MCF 10A (cell line): ENCODE measurements at regions of chr12 and their contacts with region 1.

Region 1: GRCh38 chr12:54191550-54192022 is 2.8 kb upstream of the SMUG1 start:
- DNase-seq: peak; percentile 87
- H3K4me3 Mint-ChIP-seq: no peak overlapping the region
- H3K27ac Mint-ChIP-seq: no peak overlapping the region
- H3K4me1 Mint-ChIP-seq: peaks cover 9% of the 10 kb centered on the region
- H3K27me3 Mint-ChIP-seq: no peaks in the 10 kb centered on the region
- CTCF ChIP-seq: peak; percentile 48

Region 2: GRCh38 chr12:53675651-53676453 is 515.7 kb before region 1 on chr12 and contains the start of gene ATP5MC2:
- CTCF ChIA-PET with region 1: no interaction called
- POLR2A ChIA-PET with region 1: no interaction called
- intact Hi-C with region 1: no loop called
- DNase-seq: peak; percentile 98
- H3K4me3 Mint-ChIP-seq: peak within 1 kb of the TSS; percentile 83
- H3K27ac Mint-ChIP-seq: peak within 1 kb of the TSS; percentile 80
- H3K4me1 Mint-ChIP-seq: peaks cover 10% of the 10 kb centered on the region
- H3K27me3 Mint-ChIP-seq: peaks cover 12% of the 10 kb centered on the region
- CTCF ChIP-seq: peak; percentile 97
- total RNA-seq, gene ATP5MC2: 328 and 381 TPM in 2 replicates

Region 3: DNA sequence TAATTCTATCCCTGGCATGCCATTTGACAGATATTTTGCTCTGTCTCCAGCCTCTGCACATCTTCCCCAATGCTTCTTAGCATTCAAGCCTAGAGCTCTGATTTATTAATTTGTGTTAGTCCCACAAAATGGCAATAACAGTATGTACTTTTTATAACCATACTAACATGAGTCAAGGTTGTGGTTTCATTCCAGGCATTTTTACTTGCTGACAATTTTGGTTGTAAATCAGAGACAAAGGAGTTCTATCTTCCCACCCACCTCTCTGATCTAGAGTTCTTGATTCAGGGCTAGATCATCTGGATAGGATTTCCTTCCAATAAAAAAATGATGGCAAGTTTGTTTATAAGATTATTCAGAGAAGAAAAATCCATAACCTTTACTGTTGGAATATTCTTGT is 421.3 kb before region 1 on chr12:
- CTCF ChIA-PET with region 1: interaction called, 4 read pairs
- POLR2A ChIA-PET with region 1: no interaction called
- intact Hi-C with region 1: loop called (anchors 5 kb)
- DNase-seq: peak; percentile 61
- H3K4me3 Mint-ChIP-seq: peak overlapping the region; percentile 0
- H3K27ac Mint-ChIP-seq: peak overlapping the region; percentile 6
- H3K4me1 Mint-ChIP-seq: peaks cover 25% of the 10 kb centered on the region
- H3K27me3 Mint-ChIP-seq: no peaks in the 10 kb centered on the region
- CTCF ChIP-seq: no peak

Region 4: DNA sequence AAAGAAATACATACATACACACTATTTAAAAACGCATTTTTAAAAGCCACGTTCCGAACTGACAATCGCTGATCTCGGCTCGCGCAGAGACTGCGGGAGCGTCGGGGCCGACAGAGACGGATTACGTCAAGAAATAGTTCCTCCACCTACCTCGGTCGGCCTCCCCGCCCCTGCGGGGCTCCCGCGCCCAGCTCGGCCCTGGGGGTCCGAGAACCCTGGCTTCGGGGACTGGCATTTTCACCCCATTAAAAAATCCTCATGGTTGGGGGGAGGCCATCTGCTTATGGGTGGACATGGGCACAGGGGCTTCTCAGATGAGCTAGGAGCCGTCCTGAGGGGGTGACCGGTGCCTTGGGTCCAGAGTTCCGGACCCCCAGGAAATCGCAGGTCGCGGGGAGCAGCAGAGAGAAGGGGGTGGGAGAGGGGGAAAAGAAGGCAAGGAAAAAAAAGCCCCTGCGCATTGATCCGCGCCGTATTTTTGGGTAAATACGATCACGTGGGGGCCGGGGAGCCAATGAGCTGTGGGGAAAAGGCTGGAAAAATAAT is 192.0 kb before region 1 on chr12:
- CTCF ChIA-PET with region 1: interaction called, 130 read pairs
- POLR2A ChIA-PET with region 1: interaction called, 25 read pairs
- intact Hi-C with region 1: no loop called
- DNase-seq: peak; percentile 90
- H3K4me3 Mint-ChIP-seq: peak overlapping the region; percentile 89
- H3K27ac Mint-ChIP-seq: peak overlapping the region; percentile 97
- H3K4me1 Mint-ChIP-seq: peaks cover 12% of the 10 kb centered on the region
- H3K27me3 Mint-ChIP-seq: no peaks in the 10 kb centered on the region
- CTCF ChIP-seq: no peak

Region 5: GRCh38 chr12:54005853-54006686 is 185.5 kb before region 1 on chr12:
- CTCF ChIA-PET with region 1: interaction called, 130 read pairs
- POLR2A ChIA-PET with region 1: interaction called, 9 read pairs
- intact Hi-C with region 1: loop called (anchors 1 kb)
- DNase-seq: peak; percentile 88
- H3K4me3 Mint-ChIP-seq: no peak overlapping the region
- H3K27ac Mint-ChIP-seq: no peak overlapping the region
- H3K4me1 Mint-ChIP-seq: peaks cover 25% of the 10 kb centered on the region
- H3K27me3 Mint-ChIP-seq: no peaks in the 10 kb centered on the region
- CTCF ChIP-seq: peak; percentile 96

Region 6: DNA sequence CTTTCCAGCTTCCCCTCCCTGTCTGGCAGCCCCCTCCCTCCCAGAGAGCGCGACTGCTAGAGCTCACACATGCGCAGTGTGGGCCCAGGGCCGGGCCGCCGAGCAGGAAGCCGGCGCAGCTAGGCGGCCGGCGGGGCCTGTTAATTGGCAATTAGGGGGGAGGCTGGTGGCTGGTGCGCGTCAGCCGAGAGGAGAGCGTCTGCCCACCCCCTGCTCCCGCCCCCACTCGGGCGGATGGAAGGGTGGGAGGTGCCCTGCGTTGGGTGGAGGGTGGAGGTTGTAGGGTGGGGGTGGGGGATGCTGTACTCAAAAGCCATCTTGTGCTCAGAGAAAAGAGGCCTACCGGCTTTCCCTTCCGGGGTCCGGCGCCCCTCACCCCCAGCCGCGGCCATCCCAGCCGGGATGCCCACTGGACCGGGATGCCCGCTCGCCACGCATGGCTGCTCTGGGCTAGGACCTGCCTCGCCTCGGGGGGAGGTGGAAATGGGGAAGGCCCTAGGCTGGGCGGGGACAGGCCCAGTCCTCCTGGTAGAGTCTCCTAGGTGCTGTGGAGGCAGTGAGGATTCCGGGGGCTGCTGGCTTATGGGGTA is 173.6 kb before region 1 on chr12:
- CTCF ChIA-PET with region 1: interaction called, 5 read pairs
- POLR2A ChIA-PET with region 1: interaction called, 17 read pairs
- intact Hi-C with region 1: no loop called
- DNase-seq: peak; percentile 96
- H3K4me3 Mint-ChIP-seq: peak overlapping the region; percentile 98
- H3K27ac Mint-ChIP-seq: peak overlapping the region; percentile 98
- H3K4me1 Mint-ChIP-seq: peaks cover 23% of the 10 kb centered on the region
- H3K27me3 Mint-ChIP-seq: no peaks in the 10 kb centered on the region
- CTCF ChIP-seq: no peak

Region 7: DNA sequence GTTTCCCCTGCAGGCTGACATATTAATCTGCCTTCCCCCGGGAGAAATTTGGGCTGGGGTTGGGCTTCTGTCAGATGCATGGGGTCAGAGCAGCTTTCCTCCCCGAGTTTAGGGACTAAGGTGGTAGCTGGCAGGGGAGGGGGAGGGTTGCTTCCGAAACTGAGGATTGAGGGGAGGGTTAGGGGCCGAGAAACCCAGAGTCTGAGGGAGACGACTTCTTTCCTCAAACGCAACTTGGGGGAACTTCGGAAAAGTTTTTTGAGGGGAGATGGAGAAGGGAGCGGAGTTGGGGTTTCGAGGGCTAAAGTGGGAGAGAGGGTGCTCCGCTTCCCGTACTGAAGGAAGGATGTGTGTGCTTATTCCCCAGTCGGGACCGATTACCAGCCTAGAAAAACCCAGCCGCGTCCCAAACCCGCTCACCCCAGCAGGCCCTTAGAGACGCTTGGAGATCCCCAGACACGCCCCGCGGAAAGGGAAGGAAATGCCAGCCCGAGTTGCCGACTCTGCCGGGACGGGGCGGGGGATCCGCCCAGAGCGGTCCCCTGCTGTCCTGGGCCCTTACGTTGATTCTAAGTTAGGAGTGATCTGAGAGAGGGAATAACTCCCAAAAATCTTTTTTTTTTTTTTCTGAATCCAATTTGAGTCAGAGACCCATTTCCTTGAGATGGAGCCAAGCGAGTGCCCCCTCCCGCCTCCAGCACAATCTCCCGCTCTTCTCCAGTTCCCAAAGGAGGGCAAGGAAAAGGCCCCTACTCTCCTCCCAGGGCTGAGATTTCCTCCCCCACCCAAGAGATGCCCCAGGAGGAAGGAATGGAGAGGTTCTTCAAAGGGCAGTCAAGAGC is 64.7 kb before region 1 on chr12:
- CTCF ChIA-PET with region 1: no interaction called
- POLR2A ChIA-PET with region 1: interaction called, 3 read pairs
- intact Hi-C with region 1: loop called (anchors 2 kb)
- DNase-seq: peak; percentile 69
- H3K4me3 Mint-ChIP-seq: peak overlapping the region; percentile 86
- H3K27ac Mint-ChIP-seq: peak overlapping the region; percentile 90
- H3K4me1 Mint-ChIP-seq: peaks cover 19% of the 10 kb centered on the region
- H3K27me3 Mint-ChIP-seq: no peaks in the 10 kb centered on the region
- CTCF ChIP-seq: no peak

Region 8: DNA sequence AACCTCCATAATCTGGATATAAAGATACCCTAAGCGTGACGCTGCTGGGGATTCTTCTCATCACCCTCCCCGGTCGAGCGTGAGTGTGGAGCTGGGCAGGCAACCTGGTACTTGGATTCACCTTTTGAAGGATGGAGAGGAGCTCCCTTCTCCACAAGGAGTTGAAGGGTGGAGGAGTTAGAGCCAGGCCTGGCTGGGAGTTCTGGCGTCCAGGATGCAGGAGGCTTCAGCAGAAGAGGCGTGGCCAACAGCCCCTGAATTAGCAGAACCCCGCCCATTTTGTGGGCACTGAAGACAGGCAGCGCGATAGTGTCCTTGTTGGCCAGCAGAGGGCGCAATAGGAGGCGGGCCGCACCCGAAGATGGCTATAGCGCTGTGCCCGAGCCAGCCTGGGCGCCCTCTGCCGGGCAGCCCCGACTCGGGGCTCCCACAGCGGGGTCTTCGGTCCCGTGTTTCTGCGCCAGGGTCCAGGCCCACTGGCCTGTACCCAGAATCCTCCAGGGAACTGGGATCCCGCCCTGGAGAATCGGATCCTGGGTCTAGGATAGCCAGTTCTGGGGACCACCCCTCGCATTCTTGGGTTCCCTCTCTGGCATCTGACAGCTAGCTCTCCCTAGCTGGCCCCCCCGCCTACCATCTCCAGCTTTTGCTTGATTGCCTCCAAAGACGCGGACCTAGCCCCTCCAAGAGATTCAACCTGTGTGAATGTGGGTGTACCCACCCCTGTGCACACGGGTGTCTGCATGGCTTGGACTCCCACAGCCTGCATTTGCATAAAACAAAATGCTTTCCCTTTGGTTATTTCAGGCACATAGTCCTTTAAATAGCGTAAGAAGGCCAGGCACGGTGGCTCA is 23.2 kb after region 1 on chr12:
- CTCF ChIA-PET with region 1: interaction called, 111 read pairs
- POLR2A ChIA-PET with region 1: no interaction called
- intact Hi-C with region 1: no loop called
- DNase-seq: peak; percentile 93
- H3K4me3 Mint-ChIP-seq: peak overlapping the region; percentile 26
- H3K27ac Mint-ChIP-seq: no peak overlapping the region
- H3K4me1 Mint-ChIP-seq: peaks cover 12% of the 10 kb centered on the region
- H3K27me3 Mint-ChIP-seq: no peaks in the 10 kb centered on the region
- CTCF ChIP-seq: peak; percentile 99

Region 9: GRCh38 chr12:54240971-54241588 is 49.5 kb after region 1 on chr12:
- CTCF ChIA-PET with region 1: no interaction called
- POLR2A ChIA-PET with region 1: no interaction called
- intact Hi-C with region 1: no loop called
- DNase-seq: no peak
- H3K4me3 Mint-ChIP-seq: no peak overlapping the region
- H3K27ac Mint-ChIP-seq: peak overlapping the region; percentile 25
- H3K4me1 Mint-ChIP-seq: no peaks in the 10 kb centered on the region
- H3K27me3 Mint-ChIP-seq: no peaks in the 10 kb centered on the region
- CTCF ChIP-seq: no peak